ENCODE measurements at regions of chr10 and their contacts with region 1.

Region 1: GRCh38 chr10:107814865-107815487 is 650.5 kb upstream of the SORCS1 start:
- DNase-seq: peak; percentile 15
- ATAC-seq: no peak
- H3K4me3 ChIP-seq: no peak overlapping the region
- H3K27ac ChIP-seq: no peak overlapping the region
- H3K4me1 ChIP-seq: no peaks in the 10 kb centered on the region
- H3K27me3 ChIP-seq: no peaks in the 10 kb centered on the region
- CTCF ChIP-seq: peak; percentile 73

Region 2: GRCh38 chr10:106705681-106706100 is 1109.3 kb before region 1 on chr10:
- CTCF ChIA-PET with region 1: no interaction called
- POLR2A ChIA-PET with region 1: no interaction called
- in situ Hi-C with region 1: no loop called
- intact Hi-C with region 1: loop called (anchors 10 kb)
- DNase-seq: peak; percentile 36
- ATAC-seq: peak; percentile 84
- H3K4me3 ChIP-seq: no peak overlapping the region
- H3K27ac ChIP-seq: no peak overlapping the region
- H3K4me1 ChIP-seq: no peaks in the 10 kb centered on the region
- H3K27me3 ChIP-seq: peaks cover 6% of the 10 kb centered on the region; the same call in 1 of the 2 replicates
- CTCF ChIP-seq: peak; percentile 92

Region 3: GRCh38 chr10:106795619-106796018 is 1019.4 kb before region 1 on chr10:
- CTCF ChIA-PET with region 1: no interaction called
- POLR2A ChIA-PET with region 1: no interaction called
- in situ Hi-C with region 1: no loop called
- intact Hi-C with region 1: loop called (anchors 10 kb)
- DNase-seq: no peak
- ATAC-seq: no peak; the same call in 1 of the 2 replicates
- H3K4me3 ChIP-seq: no peak overlapping the region
- H3K27ac ChIP-seq: no peak overlapping the region
- H3K4me1 ChIP-seq: no peaks in the 10 kb centered on the region
- H3K27me3 ChIP-seq: peaks cover 9% of the 10 kb centered on the region; the same call in 1 of the 2 replicates
- CTCF ChIP-seq: peak; percentile 63

Region 4: GRCh38 chr10:107718864-107719263 is 96.1 kb before region 1 on chr10:
- CTCF ChIA-PET with region 1: no interaction called
- POLR2A ChIA-PET with region 1: no interaction called
- in situ Hi-C with region 1: no loop called
- intact Hi-C with region 1: no loop called
- DNase-seq: no peak
- ATAC-seq: no peak
- H3K4me3 ChIP-seq: no peak overlapping the region
- H3K27ac ChIP-seq: no peak overlapping the region
- H3K4me1 ChIP-seq: no peaks in the 10 kb centered on the region
- H3K27me3 ChIP-seq: no peaks in the 10 kb centered on the region
- CTCF ChIP-seq: no peak